ENCODE measurements at regions of chr9 and their contacts with region 1.

Region 1: DNA sequence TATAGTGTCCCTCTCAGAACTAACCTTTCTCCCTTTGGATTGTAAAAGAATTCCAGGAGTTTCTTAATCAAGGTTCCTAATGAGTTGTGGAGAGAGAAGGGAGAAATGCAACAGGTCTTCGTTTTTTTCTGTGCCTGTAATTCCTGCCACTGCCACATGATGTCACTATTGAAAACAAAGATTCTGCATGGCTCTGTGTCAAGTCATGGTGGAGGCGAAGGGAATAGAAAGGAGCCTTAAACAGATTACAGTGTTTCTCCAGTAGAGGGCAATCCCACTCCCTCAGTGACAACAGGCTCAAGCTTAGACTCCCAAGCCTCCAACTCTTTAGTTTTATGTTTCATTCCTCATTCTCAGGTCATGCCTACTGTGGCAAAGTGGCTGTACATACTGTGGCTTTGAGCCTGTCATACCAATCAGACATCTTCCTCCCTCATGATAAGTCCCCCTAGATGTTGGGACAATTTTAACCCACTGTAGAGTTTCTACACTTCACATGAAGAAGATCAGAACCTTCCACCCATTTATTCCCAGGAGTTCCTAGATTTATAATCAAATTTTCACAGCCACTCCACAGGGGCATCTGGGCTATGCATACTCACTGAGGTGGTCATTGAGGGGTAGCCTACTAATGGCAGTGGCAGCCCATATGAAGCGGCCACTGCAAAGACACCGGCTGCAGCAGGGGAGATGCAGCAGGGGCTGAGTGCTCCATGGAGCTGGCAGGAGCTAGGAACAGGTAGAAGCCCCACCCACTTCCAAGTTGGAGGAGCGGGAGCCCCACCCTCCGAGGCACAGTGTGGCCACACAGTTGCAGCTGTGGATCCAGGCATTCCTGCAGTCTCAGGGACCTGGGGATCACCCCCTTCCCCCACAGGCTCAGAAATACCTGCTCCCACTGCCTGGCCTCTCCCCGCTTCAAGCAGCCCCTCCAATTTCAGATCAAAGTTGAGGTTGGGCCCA is 97.4 kb upstream of the TRIM32 start:
- DNase-seq: no peak
- ATAC-seq: peak; percentile 76
- H3K4me3 ChIP-seq: no peak overlapping the region
- H3K27ac ChIP-seq: no peak overlapping the region
- H3K4me1 ChIP-seq: no peaks in the 10 kb centered on the region
- H3K27me3 ChIP-seq: no peaks in the 10 kb centered on the region
- CTCF ChIP-seq: peak; percentile 67

Region 2: DNA sequence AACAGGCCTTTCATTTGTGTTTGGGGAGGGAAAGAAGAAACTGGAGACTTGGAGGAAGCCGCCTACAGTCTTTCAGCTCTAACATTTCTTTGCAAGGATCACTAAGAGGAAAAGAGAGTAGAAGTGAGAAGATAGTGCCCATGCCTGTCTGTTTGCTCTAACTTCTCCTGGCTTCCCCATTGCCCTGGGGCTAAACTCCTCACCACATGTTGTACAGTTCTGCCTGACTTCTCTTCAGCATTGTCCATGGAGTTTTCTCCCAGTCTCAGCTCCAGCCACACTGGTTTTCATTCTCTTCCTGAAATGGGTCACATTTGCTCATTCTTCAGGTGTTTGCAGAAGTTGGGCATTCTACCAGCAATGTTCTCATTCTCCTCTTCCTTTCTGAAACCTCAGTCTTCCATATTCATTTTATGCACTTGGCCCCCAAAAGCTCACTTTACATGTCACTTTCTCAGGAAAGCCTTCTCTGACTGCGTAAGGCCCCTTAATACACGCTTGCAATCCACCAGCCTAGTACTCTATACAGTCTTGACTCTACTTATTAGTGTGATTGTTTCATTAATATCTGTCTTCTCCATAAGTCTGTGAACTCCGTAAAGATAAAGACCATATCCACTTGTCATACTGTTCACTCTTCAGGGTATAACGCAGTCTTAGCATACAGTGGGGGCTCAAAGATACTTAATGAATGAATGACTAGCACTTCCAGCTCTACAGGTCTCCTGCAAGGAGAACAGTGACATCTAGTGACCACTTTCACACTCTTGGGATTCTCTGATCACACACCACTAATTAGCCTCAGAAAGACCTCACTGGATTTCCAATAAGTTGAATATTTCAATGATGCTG is 57.2 kb after region 1 on chr9:
- CTCF ChIA-PET with region 1: no interaction called
- POLR2A ChIA-PET with region 1: no interaction called
- in situ Hi-C with region 1: no loop called
- intact Hi-C with region 1: loop called (anchors 10 kb)
- DNase-seq: no peak
- ATAC-seq: peak; percentile 83
- H3K4me3 ChIP-seq: no peak overlapping the region
- H3K27ac ChIP-seq: no peak overlapping the region
- H3K4me1 ChIP-seq: no peaks in the 10 kb centered on the region
- H3K27me3 ChIP-seq: no peaks in the 10 kb centered on the region
- CTCF ChIP-seq: peak; percentile 63

Measured in Panc1 (cell line).